CD8-positive, alpha-beta T cell (primary cell): ENCODE measurements at regions of chr1 and their contacts with region 1.

Region 1: GRCh38 chr1:26864610-26865527 is 1.9 kb downstream of the SFN start:
- DNase-seq: peak; percentile 89 to 97 (median 93)
- ATAC-seq: peak; percentile 96
- H3K4me3 ChIP-seq: peak overlapping the region; percentile 60 to 88
- H3K4me3 Mint-ChIP-seq: peak overlapping the region; percentile 97
- H3K27ac ChIP-seq: peak overlapping the region; percentile 52 to 80
- H3K27ac Mint-ChIP-seq: peak overlapping the region; percentile 91
- H3K4me1 ChIP-seq: peaks cover 4% of the 10 kb centered on the region
- H3K4me1 Mint-ChIP-seq: peaks cover 15% of the 10 kb centered on the region
- H3K27me3 ChIP-seq: no peaks in the 10 kb centered on the region
- H3K27me3 Mint-ChIP-seq: no peaks in the 10 kb centered on the region
- CTCF ChIP-seq: no peak

Region 2: GRCh38 chr1:26317612-26318337 is 547.1 kb before region 1 on chr1 and contains the start of gene CD52:
- CTCF ChIA-PET with region 1: no interaction called
- POLR2A ChIA-PET with region 1: no interaction called
- intact Hi-C with region 1: no loop called
- DNase-seq: peak; percentile 47 to 87 (median 78)
- ATAC-seq: peak; percentile 85
- H3K4me3 ChIP-seq: peak within 1 kb of the TSS; percentile 87 to 93
- H3K4me3 Mint-ChIP-seq: peak within 1 kb of the TSS; percentile 91
- H3K27ac ChIP-seq: peak within 1 kb of the TSS; percentile 54 to 66
- H3K27ac Mint-ChIP-seq: peak within 1 kb of the TSS; percentile 90
- H3K4me1 ChIP-seq: peaks cover 68% of the 10 kb centered on the region
- H3K4me1 Mint-ChIP-seq: peaks cover 74% of the 10 kb centered on the region
- H3K27me3 ChIP-seq: no peaks in the 10 kb centered on the region
- H3K27me3 Mint-ChIP-seq: no peaks in the 10 kb centered on the region
- CTCF ChIP-seq: no peak
- total RNA-seq, gene CD52: 285 to 289 TPM

Region 3: DNA sequence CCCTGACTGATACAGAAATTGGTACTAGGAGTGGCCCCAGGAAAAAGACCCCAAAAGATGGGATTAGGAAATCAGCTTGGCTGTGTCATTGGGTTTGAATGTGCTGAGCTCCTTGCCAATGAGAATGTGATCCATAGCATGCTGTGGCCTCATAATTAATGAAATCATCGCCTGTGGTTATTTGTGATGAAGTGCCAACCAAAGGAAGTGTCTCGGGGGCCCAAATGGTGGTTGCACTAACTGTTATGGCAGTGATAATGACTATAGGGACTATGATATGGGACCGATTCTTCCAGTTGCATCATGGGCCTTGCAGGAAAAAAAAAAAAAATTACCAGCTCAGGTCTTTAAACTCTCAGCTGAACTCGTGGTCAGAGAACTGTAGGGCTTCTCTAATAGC is 53.8 kb before region 1 on chr1:
- CTCF ChIA-PET with region 1: interaction called, 11 read pairs
- POLR2A ChIA-PET with region 1: interaction called, 4 read pairs
- intact Hi-C with region 1: no loop called
- DNase-seq: peak in 2 of 9 experiments; percentile 63 to 78
- ATAC-seq: peak; percentile 27
- H3K4me3 ChIP-seq: no peak overlapping the region
- H3K4me3 Mint-ChIP-seq: no peak overlapping the region
- H3K27ac ChIP-seq: peak overlapping the region in 1 of 2 experiments; percentile 64
- H3K27ac Mint-ChIP-seq: peak overlapping the region; percentile 58
- H3K4me1 ChIP-seq: peaks cover 8% of the 10 kb centered on the region
- H3K4me1 Mint-ChIP-seq: peaks cover 14% of the 10 kb centered on the region
- H3K27me3 ChIP-seq: no peaks in the 10 kb centered on the region
- H3K27me3 Mint-ChIP-seq: no peaks in the 10 kb centered on the region
- CTCF ChIP-seq: no peak

Region 4: DNA sequence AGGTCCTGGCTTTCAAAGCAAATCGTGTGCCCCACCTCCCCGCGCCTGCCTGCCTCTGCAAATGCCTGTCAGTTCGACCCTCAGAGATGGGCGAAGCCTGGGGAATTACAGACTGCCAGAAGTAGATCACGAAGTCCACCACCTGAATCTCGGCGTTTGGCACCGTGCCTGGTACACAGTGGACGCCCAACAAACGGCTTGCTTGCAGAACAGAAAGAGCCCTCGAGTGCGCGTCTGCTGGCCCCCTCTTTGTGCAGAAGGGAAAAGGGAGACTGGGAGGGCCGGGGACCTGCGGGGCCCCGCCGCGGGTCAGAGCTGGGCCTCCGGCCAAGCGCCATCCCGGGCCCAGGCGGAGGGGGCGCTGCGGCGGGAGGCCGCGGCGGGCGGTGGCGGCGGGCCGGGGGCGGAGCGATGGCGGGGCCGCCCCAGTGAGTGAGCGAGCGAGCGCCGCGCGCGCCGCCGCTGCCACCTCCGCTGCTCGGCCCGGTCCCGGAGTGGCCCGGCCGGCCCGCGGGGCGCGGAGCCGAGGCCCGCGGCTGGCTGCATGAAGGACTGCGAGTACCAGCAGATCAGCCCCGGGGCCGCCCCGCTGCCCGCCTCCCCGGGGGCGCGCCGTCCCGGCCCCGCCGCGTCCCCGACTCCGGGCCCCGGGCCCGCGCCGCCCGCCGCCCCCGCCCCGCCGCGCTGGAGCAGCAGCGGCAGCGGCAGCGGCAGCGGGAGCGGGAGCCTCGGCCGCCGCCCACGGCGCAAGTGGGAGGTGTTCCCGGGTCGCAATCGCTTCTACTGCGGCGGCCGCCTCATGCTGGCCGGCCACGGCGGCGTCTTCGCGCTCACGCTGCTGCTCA is 38.4 kb before region 1 on chr1 and contains the start of gene ZDHHC18:
- CTCF ChIA-PET with region 1: interaction called, 4 read pairs
- POLR2A ChIA-PET with region 1: interaction called, 4 read pairs
- intact Hi-C with region 1: loop called in 1 of 2 experiments (anchors 2 kb)
- DNase-seq: peak; percentile 48 to 86 (median 69)
- ATAC-seq: peak; percentile 89
- H3K4me3 ChIP-seq: peak within 1 kb of the TSS; percentile 68 to 91
- H3K4me3 Mint-ChIP-seq: peak within 1 kb of the TSS; percentile 94
- H3K27ac ChIP-seq: peak within 1 kb of the TSS; percentile 64 to 91
- H3K27ac Mint-ChIP-seq: peak within 1 kb of the TSS; percentile 96
- H3K4me1 ChIP-seq: peaks cover 50% of the 10 kb centered on the region
- H3K4me1 Mint-ChIP-seq: peaks cover 63% of the 10 kb centered on the region
- H3K27me3 ChIP-seq: no peaks in the 10 kb centered on the region
- H3K27me3 Mint-ChIP-seq: no peaks in the 10 kb centered on the region
- CTCF ChIP-seq: peak; percentile 50
- total RNA-seq, gene ZDHHC18: 55.2 to 55.4 TPM

Region 5: GRCh38 chr1:26874896-26875295 is 10.0 kb after region 1 on chr1:
- CTCF ChIA-PET with region 1: interaction called, 17 read pairs
- POLR2A ChIA-PET with region 1: interaction called, 3 read pairs
- intact Hi-C with region 1: loop called in 1 of 2 experiments (anchors 2 kb)
- DNase-seq: no peak
- ATAC-seq: no peak
- H3K4me3 ChIP-seq: no peak overlapping the region
- H3K4me3 Mint-ChIP-seq: no peak overlapping the region
- H3K27ac ChIP-seq: no peak overlapping the region
- H3K27ac Mint-ChIP-seq: no peak overlapping the region
- H3K4me1 ChIP-seq: no peaks in the 10 kb centered on the region
- H3K4me1 Mint-ChIP-seq: no peaks in the 10 kb centered on the region
- H3K27me3 ChIP-seq: no peaks in the 10 kb centered on the region
- H3K27me3 Mint-ChIP-seq: no peaks in the 10 kb centered on the region
- CTCF ChIP-seq: no peak

Region 6: DNA sequence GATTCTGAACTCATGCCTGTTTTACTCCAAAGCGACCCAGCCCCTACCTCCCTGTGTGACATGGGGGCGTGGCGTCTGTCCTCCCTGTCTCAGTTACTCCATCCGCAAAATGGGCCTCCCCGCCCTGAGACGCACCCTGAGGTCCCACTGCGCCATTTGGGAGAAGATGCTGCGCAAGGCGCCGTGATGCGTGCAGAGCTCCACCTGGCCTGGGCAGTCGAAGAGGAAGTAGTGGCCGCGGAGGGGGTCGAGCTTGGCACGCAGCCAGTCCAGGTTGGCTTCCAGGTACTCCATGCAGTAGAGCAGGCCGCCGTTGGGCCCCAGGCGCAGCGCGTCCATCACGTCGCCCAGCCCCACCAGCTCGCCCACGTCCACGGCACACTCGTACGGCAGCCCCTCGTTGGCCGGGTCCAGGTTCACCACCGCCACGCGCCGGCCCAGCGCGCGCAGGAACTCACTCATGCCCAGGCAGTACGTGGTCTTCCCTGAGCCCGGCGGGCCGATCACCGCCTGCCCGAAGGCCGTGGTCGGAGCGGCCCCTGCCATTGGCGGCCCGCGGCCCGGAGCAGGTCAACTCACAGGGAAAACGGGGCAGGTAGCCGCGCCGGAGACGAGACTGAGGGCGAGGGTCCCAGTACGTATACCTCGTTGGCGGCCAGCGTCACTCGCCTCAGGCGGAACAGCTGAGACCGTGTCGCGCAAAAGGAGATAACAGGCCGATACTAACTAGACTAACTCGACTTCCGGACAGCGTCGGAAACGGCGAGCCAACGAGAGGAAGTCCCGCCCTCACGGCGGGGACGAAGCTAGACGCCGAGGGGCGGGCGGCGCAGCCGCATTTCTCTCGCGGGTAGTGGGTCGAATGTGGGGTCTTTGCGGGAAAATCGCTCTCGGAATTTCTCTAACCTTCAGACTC is 24.9 kb after region 1 on chr1 and contains the start of gene GPN2:
- CTCF ChIA-PET with region 1: interaction called, 3 read pairs
- POLR2A ChIA-PET with region 1: interaction called, 16 read pairs
- intact Hi-C with region 1: loop called in 1 of 2 experiments (anchors 1 kb)
- DNase-seq: peak; percentile 44 to 90 (median 74)
- ATAC-seq: peak; percentile 92
- H3K4me3 ChIP-seq: peak within 1 kb of the TSS; percentile 57 to 94
- H3K4me3 Mint-ChIP-seq: peak within 1 kb of the TSS; percentile 94
- H3K27ac ChIP-seq: peak within 1 kb of the TSS; percentile 80 to 86
- H3K27ac Mint-ChIP-seq: peak within 1 kb of the TSS; percentile 96
- H3K4me1 ChIP-seq: peaks cover 18% of the 10 kb centered on the region
- H3K4me1 Mint-ChIP-seq: peaks cover 42% of the 10 kb centered on the region
- H3K27me3 ChIP-seq: no peaks in the 10 kb centered on the region
- H3K27me3 Mint-ChIP-seq: no peaks in the 10 kb centered on the region
- CTCF ChIP-seq: no peak
- total RNA-seq, gene GPN2: 35.1 to 37.4 TPM

Region 7: DNA sequence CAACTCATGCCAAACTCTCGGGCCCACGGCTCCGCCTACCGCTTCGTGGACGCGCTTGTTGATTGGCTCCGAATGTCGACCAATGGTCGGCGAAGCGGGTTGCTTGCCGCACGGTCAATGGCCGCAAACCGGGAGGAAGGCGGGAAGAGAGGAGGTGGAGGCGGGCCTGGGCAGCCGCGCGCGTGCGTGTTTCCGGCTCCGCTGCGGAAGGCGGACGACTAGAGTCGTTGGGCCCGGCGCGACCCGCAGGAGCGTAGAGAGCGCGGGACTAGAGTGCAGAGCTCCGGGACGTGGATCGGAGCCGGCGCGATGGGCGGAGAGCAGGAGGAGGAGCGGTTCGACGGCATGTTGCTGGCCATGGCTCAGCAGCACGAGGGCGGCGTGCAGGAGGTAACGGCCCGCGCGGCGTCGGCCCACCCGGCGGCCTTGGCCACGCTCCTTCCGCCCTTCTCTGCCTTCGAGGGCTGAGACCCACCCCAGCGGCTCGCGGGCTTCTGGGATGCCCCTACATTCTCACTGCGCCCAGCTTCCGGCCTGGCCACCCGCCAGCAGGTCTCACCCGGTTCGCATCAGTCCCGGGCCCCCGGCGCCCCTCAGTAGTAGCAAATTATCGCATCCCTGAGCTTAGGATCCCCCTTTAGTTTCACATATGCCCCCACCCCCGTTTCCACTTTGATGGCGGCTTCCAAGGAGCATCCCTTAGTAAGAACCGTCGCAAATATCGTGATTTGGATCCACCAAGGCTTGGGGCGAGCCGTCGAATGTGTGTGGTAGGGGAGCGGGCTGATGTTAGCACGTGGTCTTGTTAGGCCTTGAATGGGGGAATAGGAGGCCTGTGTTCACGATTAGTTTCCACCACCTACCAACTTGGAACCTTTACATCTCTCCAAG is 56.9 kb after region 1 on chr1 and contains the start of gene NUDC:
- CTCF ChIA-PET with region 1: no interaction called
- POLR2A ChIA-PET with region 1: interaction called, 3 read pairs
- intact Hi-C with region 1: loop called (anchors 1 kb)
- DNase-seq: peak; percentile 91 to 98 (median 94)
- ATAC-seq: peak; percentile 92
- H3K4me3 ChIP-seq: peak within 1 kb of the TSS; percentile 84 to 95
- H3K4me3 Mint-ChIP-seq: peak within 1 kb of the TSS; percentile 95
- H3K27ac ChIP-seq: peak within 1 kb of the TSS; percentile 87 to 90
- H3K27ac Mint-ChIP-seq: peak within 1 kb of the TSS; percentile 99
- H3K4me1 ChIP-seq: peaks cover 23% of the 10 kb centered on the region
- H3K4me1 Mint-ChIP-seq: peaks cover 34% of the 10 kb centered on the region
- H3K27me3 ChIP-seq: no peaks in the 10 kb centered on the region
- H3K27me3 Mint-ChIP-seq: no peaks in the 10 kb centered on the region
- CTCF ChIP-seq: no peak
- total RNA-seq, gene NUDC: 51.9 to 55.0 TPM

Region 8: GRCh38 chr1:27071049-27071416 is 206.2 kb after region 1 on chr1:
- CTCF ChIA-PET with region 1: no interaction called
- POLR2A ChIA-PET with region 1: no interaction called
- intact Hi-C with region 1: no loop called
- DNase-seq: no peak
- ATAC-seq: no peak
- H3K4me3 ChIP-seq: no peak overlapping the region
- H3K4me3 Mint-ChIP-seq: no peak overlapping the region
- H3K27ac ChIP-seq: no peak overlapping the region
- H3K27ac Mint-ChIP-seq: no peak overlapping the region
- H3K4me1 ChIP-seq: no peaks in the 10 kb centered on the region
- H3K4me1 Mint-ChIP-seq: no peaks in the 10 kb centered on the region
- H3K27me3 ChIP-seq: no peaks in the 10 kb centered on the region
- H3K27me3 Mint-ChIP-seq: peaks cover 4% of the 10 kb centered on the region
- CTCF ChIP-seq: no peak